Caco-2 (cell line): ENCODE measurements at regions of chr7 and their contacts with region 1.

Region 1: DNA sequence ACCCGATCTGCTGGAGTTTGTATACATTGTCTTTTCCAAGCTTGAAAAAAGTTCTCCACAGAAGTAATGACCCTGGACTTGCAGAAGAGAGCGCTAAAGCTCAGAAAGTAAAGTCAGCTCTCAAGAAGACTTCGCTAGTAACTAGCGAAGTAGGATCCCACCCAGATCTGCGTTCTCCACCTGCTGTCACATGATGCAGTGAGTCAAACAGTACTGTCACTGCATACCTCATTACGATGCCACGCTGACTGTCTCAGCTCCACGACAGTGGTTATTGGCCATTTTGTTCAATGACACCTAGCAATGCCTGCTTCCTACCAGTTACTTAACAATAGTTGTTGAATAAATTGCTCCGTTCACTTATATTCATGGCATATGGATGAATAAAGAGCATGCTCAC is 29.7 kb upstream of the SEC61G start:
- DNase-seq: peak; percentile 67 to 81
- H3K4me3 ChIP-seq: no peak overlapping the region
- H3K4me3 Mint-ChIP-seq: peak overlapping the region; percentile 44
- H3K27ac Mint-ChIP-seq: no peak overlapping the region
- H3K4me1 ChIP-seq: 0 out of 2 replicates have a peak, but pooled peaks cover 4% of the 10 kb centered on the region
- H3K4me1 Mint-ChIP-seq: peaks cover 9% of the 10 kb centered on the region
- H3K27me3 ChIP-seq: no peaks in the 10 kb centered on the region
- H3K27me3 Mint-ChIP-seq: no peaks in the 10 kb centered on the region
- CTCF ChIP-seq: peak; percentile 50 to 69

Region 2: DNA sequence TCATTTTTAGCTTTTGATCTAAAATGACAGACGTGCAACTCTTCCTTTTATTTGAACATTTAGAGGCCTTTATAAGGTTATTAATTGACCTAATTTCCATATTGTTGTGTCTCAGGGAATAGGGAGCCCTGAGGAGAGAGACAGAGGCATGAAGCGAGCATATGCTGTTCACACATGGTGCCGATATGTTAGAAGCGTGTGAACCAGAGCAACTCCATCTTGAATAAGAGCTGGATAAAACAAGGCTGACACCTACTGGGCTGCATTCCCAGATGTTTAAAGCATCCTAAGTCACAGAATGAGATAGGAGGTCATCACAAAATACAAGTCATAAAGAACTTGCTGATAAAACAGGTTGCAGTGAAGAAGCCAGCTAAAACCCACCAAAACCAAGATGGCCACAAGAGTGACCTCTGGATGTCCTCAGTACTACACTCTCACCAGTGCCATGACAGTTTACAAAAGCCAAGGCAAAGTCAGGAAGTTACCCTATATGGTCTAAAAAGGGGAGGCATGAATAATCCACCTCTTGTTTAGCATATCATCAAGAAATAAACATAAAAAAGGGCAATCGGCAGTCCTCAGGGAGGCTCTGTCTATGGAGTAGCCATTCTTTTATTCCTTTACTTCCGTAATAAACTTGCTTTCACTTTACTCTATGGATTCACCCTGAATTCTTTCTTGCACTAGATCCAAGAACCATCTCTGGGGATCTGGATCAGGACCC is 109.7 kb before region 1 on chr7:
- CTCF ChIA-PET with region 1: no interaction called
- POLR2A ChIA-PET with region 1: no interaction called
- intact Hi-C with region 1: no loop called
- DNase-seq: no peak
- H3K4me3 ChIP-seq: no peak overlapping the region
- H3K4me3 Mint-ChIP-seq: no peak overlapping the region
- H3K27ac Mint-ChIP-seq: no peak overlapping the region
- H3K4me1 ChIP-seq: no peaks in the 10 kb centered on the region
- H3K4me1 Mint-ChIP-seq: no peaks in the 10 kb centered on the region
- H3K27me3 ChIP-seq: no peaks in the 10 kb centered on the region
- H3K27me3 Mint-ChIP-seq: peaks cover 28% of the 10 kb centered on the region
- CTCF ChIP-seq: no peak

Region 3: DNA sequence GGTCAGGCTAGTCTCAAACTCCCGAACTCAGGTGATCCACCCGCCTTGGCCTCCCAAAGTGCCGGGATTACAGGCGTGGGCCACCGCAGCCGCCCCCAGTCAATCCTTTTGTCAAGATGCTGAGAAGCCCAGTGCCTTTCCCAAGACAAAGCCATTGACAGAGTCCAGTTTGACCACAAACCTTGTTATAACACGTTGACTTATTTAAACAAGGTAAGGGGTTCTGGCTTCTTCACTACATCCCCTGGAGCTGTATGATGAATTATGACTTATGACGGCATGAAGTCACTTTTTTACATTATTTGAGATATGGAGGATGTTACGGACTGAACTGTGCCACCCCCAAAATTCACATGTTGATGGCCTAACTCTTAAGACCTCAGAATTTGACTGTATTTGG is 23.8 kb before region 1 on chr7:
- CTCF ChIA-PET with region 1: no interaction called
- POLR2A ChIA-PET with region 1: no interaction called
- intact Hi-C with region 1: no loop called
- DNase-seq: no peak
- H3K4me3 ChIP-seq: no peak overlapping the region
- H3K4me3 Mint-ChIP-seq: no peak overlapping the region
- H3K27ac Mint-ChIP-seq: no peak overlapping the region
- H3K4me1 ChIP-seq: no peaks in the 10 kb centered on the region; the same call in 1 of the 2 replicates
- H3K4me1 Mint-ChIP-seq: no peaks in the 10 kb centered on the region
- H3K27me3 ChIP-seq: no peaks in the 10 kb centered on the region
- H3K27me3 Mint-ChIP-seq: peaks cover 8% of the 10 kb centered on the region
- CTCF ChIP-seq: no peak

Region 4: GRCh38 chr7:54839538-54840213 is 51.0 kb after region 1 on chr7:
- CTCF ChIA-PET with region 1: interaction called, 10 read pairs
- POLR2A ChIA-PET with region 1: no interaction called
- intact Hi-C with region 1: loop called (anchors 1 kb)
- DNase-seq: peak; percentile 56 to 74
- H3K4me3 ChIP-seq: no peak overlapping the region
- H3K4me3 Mint-ChIP-seq: no peak overlapping the region
- H3K27ac Mint-ChIP-seq: no peak overlapping the region
- H3K4me1 ChIP-seq: no peaks in the 10 kb centered on the region
- H3K4me1 Mint-ChIP-seq: no peaks in the 10 kb centered on the region
- H3K27me3 ChIP-seq: no peaks in the 10 kb centered on the region
- H3K27me3 Mint-ChIP-seq: peaks cover 5% of the 10 kb centered on the region
- CTCF ChIP-seq: peak; percentile 44 to 81

Region 5: DNA sequence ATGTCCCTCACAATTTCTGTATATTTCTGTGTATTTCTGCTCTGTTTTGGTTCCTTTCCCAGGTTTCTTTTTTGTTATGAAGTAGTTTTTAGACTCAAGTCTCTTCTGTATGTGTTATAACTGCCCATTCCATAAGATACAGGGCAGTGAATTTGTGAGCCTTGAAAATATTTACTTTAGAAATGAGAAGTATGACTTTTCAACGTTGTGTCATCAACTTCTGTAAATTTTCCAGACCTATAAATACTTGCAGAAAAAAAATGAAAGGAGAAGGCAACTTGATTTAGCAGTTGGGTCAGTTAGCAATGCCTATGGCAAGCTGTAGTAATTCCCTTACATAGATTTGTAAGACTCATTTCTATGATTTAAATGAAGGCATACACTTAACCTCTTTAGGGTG is 241.7 kb after region 1 on chr7:
- CTCF ChIA-PET with region 1: no interaction called
- POLR2A ChIA-PET with region 1: no interaction called
- intact Hi-C with region 1: loop called (anchors 5 kb)
- DNase-seq: no peak
- H3K4me3 ChIP-seq: no peak overlapping the region
- H3K4me3 Mint-ChIP-seq: no peak overlapping the region
- H3K27ac Mint-ChIP-seq: no peak overlapping the region
- H3K4me1 ChIP-seq: peaks cover 16% of the 10 kb centered on the region; the same call in 1 of the 2 replicates
- H3K4me1 Mint-ChIP-seq: peaks cover 10% of the 10 kb centered on the region
- H3K27me3 ChIP-seq: no peaks in the 10 kb centered on the region
- H3K27me3 Mint-ChIP-seq: no peaks in the 10 kb centered on the region
- CTCF ChIP-seq: no peak

Region 6: GRCh38 chr7:55073945-55074499 is 285.4 kb after region 1 on chr7:
- CTCF ChIA-PET with region 1: no interaction called
- POLR2A ChIA-PET with region 1: no interaction called
- intact Hi-C with region 1: loop called (anchors 5 kb)
- DNase-seq: peak; percentile 86 to 94
- H3K4me3 ChIP-seq: peak overlapping the region; percentile 15; the same call in 1 of the 2 replicates
- H3K4me3 Mint-ChIP-seq: peak overlapping the region; percentile 71
- H3K27ac Mint-ChIP-seq: peak overlapping the region; percentile 97
- H3K4me1 ChIP-seq: peaks cover 73% of the 10 kb centered on the region
- H3K4me1 Mint-ChIP-seq: peaks cover 55% of the 10 kb centered on the region
- H3K27me3 ChIP-seq: no peaks in the 10 kb centered on the region
- H3K27me3 Mint-ChIP-seq: no peaks in the 10 kb centered on the region
- CTCF ChIP-seq: no peak

Region 7: DNA sequence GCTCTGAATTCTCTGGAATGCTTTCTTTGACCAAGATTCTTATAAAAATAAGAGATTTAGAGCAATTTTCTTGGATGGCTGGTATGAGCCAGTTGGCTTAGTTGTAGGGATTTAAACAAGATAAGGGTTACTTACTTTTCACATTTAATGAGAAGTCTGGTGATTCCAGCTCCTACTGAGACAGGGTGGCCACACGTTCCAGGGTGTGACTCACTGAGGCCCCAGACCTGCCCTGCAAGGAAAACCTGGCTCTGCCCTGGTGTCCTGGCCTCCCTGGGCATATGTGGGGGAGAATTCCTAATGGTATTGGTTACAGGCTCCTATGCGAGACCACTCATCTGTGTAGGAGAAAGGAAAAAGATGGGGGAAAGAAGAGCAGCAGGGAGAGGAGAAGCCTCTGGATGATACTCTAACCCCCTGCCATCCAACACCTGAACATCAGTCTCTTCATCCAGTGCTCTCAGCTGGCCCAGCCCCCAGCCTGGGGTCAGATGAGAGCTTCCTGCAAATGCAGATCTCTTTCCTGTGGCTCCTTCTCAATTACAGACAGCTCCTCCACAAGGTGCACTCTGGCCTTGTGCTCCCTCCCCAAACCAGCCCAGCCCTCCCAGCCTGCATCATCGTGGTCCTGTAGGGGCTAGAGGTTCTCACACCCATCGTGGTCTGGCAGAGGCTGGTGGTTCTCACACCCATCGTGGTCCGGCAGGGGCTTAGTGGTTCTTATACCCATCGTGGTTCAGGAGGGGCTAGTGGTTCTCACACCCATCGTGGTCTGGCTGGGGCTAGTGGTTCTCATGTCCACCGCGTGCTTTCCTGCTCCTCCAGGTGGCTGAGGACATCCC is 370.1 kb after region 1 on chr7:
- CTCF ChIA-PET with region 1: no interaction called
- POLR2A ChIA-PET with region 1: no interaction called
- intact Hi-C with region 1: loop called (anchors 10 kb)
- DNase-seq: no peak
- H3K4me3 ChIP-seq: no peak overlapping the region
- H3K4me3 Mint-ChIP-seq: no peak overlapping the region
- H3K27ac Mint-ChIP-seq: no peak overlapping the region
- H3K4me1 ChIP-seq: no peaks in the 10 kb centered on the region
- H3K4me1 Mint-ChIP-seq: no peaks in the 10 kb centered on the region
- H3K27me3 ChIP-seq: no peaks in the 10 kb centered on the region
- H3K27me3 Mint-ChIP-seq: no peaks in the 10 kb centered on the region
- CTCF ChIP-seq: no peak

Region 8: DNA sequence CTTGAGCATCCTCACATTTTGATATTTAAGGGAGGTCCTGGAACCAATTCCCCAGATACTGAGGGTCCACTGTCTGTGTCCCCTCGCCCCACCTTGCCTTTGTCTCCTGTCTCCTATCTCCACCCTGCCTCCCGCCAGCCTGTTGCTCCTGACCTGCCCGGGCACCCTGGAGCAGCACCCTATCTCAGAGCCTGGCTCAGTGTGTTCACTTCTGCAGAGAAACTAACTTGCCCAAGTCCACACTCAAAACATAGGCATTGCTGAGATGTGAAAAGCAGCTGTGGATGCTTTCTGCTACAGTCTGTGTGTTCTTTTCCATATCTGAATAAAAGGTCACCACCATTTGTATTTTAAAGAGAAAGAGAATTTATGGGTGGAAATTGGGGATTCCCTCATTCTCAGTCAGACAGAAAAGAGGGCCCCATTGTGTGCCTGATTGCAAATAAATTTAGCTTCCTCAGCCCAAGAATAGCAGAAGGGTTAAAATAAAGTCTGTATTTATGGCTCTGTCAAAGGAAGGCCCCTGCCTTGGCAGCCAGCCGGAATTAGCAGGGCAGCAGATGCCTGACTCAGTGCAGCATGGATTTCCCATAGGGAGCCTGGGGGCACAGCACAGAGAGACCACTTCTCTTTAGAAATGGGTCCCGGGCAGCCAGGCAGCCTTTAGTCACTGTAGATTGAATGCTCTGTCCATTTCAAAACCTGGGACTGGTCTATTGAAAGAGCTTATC is 391.4 kb after region 1 on chr7:
- CTCF ChIA-PET with region 1: interaction called, 3 read pairs
- POLR2A ChIA-PET with region 1: no interaction called
- intact Hi-C with region 1: loop called (anchors 1 kb)
- DNase-seq: peak in 1 of 2 experiments; percentile 9
- H3K4me3 ChIP-seq: no peak overlapping the region
- H3K4me3 Mint-ChIP-seq: peak overlapping the region; percentile 68
- H3K27ac Mint-ChIP-seq: peak overlapping the region; percentile 92
- H3K4me1 ChIP-seq: peaks cover 70% of the 10 kb centered on the region
- H3K4me1 Mint-ChIP-seq: peaks cover 44% of the 10 kb centered on the region
- H3K27me3 ChIP-seq: no peaks in the 10 kb centered on the region
- H3K27me3 Mint-ChIP-seq: no peaks in the 10 kb centered on the region
- CTCF ChIP-seq: no peak